Ascending aorta (tissue), 2 donors: ENCODE measurements at regions of chr2 and their contacts with region 1.

Region 1: DNA sequence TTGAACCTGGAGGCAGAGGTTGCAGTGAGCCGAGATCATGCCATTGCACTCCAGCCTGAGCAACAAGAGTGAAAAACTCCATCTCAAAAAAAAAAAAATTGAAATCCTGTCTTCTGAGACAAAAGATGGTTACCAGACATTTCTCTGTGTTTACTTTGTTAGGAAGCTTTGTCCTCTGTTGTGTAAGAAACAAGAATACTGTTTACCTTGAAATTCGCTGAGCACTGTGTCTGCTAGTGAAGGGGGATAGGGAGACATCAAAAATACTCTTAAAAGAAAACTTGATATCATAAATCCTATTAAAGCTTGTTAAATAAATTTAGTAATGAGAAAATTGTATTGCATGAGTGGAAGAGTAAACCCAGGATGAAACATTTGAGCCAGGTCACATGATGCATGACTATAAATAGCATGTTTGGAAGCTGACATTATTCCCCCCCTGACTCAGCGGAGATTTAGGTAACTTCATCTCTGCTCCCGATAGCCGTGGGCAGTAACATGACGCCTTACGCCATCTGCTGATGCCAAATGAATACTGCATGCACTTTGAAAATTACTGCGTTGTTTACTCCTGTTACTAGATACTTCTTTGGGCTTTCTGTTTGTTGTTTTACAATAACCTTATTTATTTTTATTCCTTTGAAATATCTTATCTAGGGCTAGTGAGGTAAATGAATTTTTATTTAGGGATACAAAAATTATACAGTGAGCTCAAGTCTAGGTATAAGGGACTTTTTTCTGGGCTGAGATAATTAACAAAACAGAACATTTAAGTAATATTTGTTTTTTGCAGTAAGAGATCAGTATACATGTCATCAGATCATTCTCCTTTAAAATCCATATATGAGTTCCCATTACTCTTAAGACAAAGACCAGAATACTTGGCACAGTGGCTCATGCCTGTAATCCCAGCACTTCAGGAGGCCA is 134.9 kb downstream of the MAP3K20 start:
- DNase-seq: peak in 1 of 2 donors; percentile 90
- H3K4me3 ChIP-seq: no peak overlapping the region
- H3K27ac ChIP-seq: peak overlapping the region; percentile 50 to 56
- H3K4me1 ChIP-seq: peaks cover 15 to 23% of the 10 kb centered on the region in 2 donors
- H3K27me3 ChIP-seq: no peaks in the 10 kb centered on the region
- CTCF ChIP-seq: peak; percentile 80 to 88 (median 87)

Region 2: DNA sequence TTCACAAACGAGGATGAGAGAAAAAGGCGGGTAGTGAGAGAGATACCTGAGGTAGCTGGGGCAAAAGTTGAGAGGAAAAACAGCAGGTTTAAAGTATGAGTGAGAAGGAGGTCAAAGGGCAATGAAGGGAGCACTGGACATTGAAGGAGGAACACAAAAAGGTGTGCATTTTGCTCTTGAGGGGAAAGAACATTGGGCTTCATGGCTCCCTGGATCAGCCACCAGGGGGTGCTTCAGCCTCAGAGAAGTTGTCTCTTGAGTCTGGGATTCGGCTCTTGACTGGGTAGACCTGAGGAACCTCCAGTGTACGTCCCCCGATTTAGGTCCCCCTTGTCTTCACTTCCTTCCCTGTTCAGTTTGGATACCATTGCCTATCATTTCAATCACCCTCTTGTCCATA is 346.4 kb before region 1 on chr2:
- intact Hi-C with region 1: loop called (anchors 10 kb)
- DNase-seq: no peak
- H3K4me3 ChIP-seq: no peak overlapping the region
- H3K27ac ChIP-seq: no peak overlapping the region
- H3K4me1 ChIP-seq: no peaks in the 10 kb centered on the region
- H3K27me3 ChIP-seq: no peaks in the 10 kb centered on the region
- CTCF ChIP-seq: peak; percentile 42 to 66 (median 64)

Region 3: GRCh38 chr2:173027181-173028128 is 183.1 kb before region 1 on chr2:
- intact Hi-C with region 1: loop called (anchors 1 kb)
- DNase-seq: peak; percentile 53 to 95
- H3K4me3 ChIP-seq: no peak overlapping the region
- H3K27ac ChIP-seq: peak overlapping the region; percentile 65 to 70
- H3K4me1 ChIP-seq: peaks cover 0 to 8% of the 10 kb centered on the region in 2 donors
- H3K27me3 ChIP-seq: no peaks in the 10 kb centered on the region
- CTCF ChIP-seq: peak; percentile 90 to 94 (median 93)

Region 4: GRCh38 chr2:173090276-173090877 is 120.2 kb before region 1 on chr2:
- intact Hi-C with region 1: loop called (anchors 5 kb)
- DNase-seq: no peak
- H3K4me3 ChIP-seq: peak overlapping the region; percentile 18 to 47
- H3K27ac ChIP-seq: peak overlapping the region; percentile 67 to 72
- H3K4me1 ChIP-seq: peaks cover 0 to 19% of the 10 kb centered on the region in 2 donors
- H3K27me3 ChIP-seq: no peaks in the 10 kb centered on the region
- CTCF ChIP-seq: no peak

Region 5: DNA sequence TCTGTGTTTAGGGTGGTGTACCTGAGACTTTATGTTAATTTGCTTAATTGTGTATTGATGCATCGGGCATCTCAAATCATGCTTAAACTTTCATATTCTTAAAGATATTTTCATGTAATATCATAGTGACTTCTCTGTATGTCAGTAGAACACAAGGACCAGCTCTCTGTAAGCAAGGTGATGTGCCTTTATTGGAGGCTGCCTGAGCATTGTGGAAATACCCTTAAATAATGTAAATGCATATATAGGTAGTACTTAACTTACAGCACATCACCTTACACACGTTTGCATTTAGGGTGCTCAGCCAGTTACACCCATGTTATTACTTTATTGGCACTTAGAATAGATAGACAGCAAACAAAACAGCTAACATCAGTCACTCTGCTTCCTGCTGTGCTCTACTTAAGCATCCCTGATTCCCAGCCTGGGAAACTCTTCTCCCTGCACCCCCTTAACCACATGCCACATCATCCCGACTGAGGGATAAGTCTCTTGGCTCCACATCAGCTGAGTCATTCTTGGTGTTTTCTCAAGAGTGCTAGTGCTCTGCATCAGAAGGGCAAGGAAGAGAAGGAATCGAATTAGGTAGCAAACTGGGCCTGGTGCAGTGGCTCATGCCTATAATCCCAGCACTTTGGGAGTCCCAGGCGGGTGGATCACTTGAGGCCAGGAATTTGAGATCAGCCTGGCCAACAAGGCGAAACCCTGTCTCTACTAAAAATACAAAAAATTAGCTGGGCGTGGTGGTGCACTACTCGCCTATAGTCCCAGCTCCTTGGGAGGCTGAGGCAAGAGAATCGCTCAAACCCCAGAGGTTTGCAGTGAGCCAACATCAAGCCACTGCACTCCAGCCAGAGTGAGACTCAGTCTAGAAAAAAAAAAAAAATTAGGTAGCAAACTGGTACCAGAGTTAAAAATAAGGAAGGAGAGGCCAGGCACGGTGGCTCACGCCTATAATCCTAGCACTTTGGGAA is 26.2 kb before region 1 on chr2:
- intact Hi-C with region 1: loop called (anchors 1 kb)
- DNase-seq: peak; percentile 13 to 89
- H3K4me3 ChIP-seq: no peak overlapping the region
- H3K27ac ChIP-seq: peak overlapping the region; percentile 84 to 94
- H3K4me1 ChIP-seq: peaks cover 16 to 40% of the 10 kb centered on the region in 2 donors
- H3K27me3 ChIP-seq: no peaks in the 10 kb centered on the region
- CTCF ChIP-seq: no peak

Region 6: DNA sequence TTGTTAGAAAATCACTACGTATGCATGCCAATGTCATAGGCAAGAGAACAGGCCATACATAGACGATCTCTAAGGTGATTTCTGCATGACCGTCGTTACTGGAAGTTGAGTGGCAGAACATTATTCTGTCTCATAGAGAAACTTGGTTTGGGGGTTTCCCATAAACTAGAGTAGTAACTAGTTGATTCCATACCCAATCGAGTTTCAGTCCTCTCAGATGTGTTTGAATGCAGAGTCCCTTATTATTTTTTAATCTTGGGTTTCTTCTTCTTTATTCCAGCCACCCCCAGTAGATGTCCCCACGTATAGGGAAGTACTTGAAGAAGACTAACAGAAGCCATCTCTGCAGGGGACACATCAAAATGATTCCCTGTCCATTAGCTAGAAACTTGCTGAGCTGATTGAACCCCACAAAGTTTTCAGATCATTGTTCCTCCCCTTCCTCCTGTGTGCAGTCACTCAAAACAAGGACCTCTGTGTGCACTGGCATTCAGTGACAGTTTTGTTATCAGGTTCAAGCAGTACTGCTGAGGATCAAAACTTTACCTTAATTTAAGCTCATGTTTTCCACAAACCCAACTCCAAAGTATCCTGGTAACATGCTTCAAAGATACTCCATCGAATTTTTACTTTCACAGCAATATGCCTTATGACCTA is 75.7 kb after region 1 on chr2:
- intact Hi-C with region 1: no loop called
- DNase-seq: no peak
- H3K4me3 ChIP-seq: no peak overlapping the region
- H3K27ac ChIP-seq: no peak overlapping the region
- H3K4me1 ChIP-seq: no peaks in the 10 kb centered on the region
- H3K27me3 ChIP-seq: no peaks in the 10 kb centered on the region
- CTCF ChIP-seq: no peak

Region 7: GRCh38 chr2:174997110-174997509 is 1786.6 kb after region 1 on chr2:
- intact Hi-C with region 1: no loop called
- DNase-seq: no peak
- H3K4me3 ChIP-seq: no peak overlapping the region
- H3K27ac ChIP-seq: no peak overlapping the region
- H3K4me1 ChIP-seq: peaks cover 0 to 5% of the 10 kb centered on the region in 2 donors
- H3K27me3 ChIP-seq: no peaks in the 10 kb centered on the region
- CTCF ChIP-seq: no peak